Sciatic nerve (tissue), 2 donors: ENCODE measurements at regions of chr4 and their contacts with region 1.

Region 1: DNA sequence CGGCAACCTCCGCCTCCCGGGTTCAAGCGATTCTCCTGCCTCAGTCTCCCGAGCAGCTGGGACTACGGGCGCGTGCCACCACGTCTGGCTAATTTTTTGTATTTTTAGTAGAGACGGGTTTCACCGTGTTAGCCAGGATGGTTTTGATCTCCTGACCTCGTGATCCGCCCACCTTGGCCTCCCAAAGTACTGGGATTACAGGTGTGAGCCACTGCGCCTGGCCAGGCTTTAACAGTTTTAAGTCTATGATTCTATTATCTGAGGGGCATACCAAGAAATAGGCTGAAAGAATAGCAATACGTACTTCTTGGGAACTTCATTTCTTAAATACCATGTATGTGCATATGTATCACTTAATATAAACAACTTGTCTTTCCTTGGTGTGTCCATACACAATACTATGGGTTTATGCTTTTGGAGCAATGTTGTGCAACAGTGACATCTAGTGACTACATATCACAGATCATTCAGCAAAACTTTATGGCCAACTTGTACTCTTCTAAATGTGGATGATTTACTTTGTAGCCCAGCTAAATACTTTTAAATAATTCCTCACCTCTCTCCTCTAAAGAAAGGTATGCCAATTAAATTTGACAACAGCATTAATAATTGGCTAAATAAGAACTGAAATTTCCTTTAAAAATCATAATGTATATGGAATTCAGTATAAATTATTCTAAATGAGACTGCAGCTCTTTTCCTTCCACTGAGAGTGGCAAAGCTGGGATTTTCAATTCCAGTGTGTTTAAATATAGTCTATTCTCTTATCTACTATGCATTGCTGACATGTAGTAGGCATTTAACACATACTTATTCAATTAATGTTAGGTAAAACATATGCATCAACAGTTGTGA is 10.4 kb downstream of the SLC9B1 start:
- DNase-seq: no peak
- ATAC-seq: peak; percentile 82

Region 2: GRCh38 chr4:102620697-102621497 is 388.2 kb before region 1 on chr4:
- intact Hi-C with region 1: loop called (anchors 10 kb)
- DNase-seq: no peak
- ATAC-seq: peak; percentile 89